PC-9 (cell line): ENCODE measurements at regions of chr1 and their contacts with region 1.

Region 1: GRCh38 chr1:22673486-22674409 is 20.7 kb downstream of the C1QB start:
- DNase-seq: peak in 1 of 2 experiments; percentile 64
- H3K4me3 ChIP-seq: no peak overlapping the region
- H3K27ac ChIP-seq: no peak overlapping the region
- H3K4me1 ChIP-seq: no peaks in the 10 kb centered on the region
- H3K27me3 ChIP-seq: no peaks in the 10 kb centered on the region
- CTCF ChIP-seq: peak; percentile 81

Region 2: GRCh38 chr1:22641906-22642636 is 31.7 kb before region 1 on chr1:
- CTCF ChIA-PET with region 1: no interaction called
- POLR2A ChIA-PET with region 1: no interaction called
- intact Hi-C with region 1: no loop called
- DNase-seq: peak in 1 of 2 experiments; percentile 73
- H3K4me3 ChIP-seq: no peak overlapping the region
- H3K27ac ChIP-seq: no peak overlapping the region
- H3K4me1 ChIP-seq: peaks cover 13% of the 10 kb centered on the region
- H3K27me3 ChIP-seq: 0 out of 2 replicates have a peak, but pooled peaks cover under 1% of the 10 kb centered on the region
- CTCF ChIP-seq: peak; percentile 85

Region 3: GRCh38 chr1:22808676-22809483 is 135.1 kb after region 1 on chr1:
- CTCF ChIA-PET with region 1: no interaction called
- POLR2A ChIA-PET with region 1: no interaction called
- intact Hi-C with region 1: no loop called
- DNase-seq: no peak
- H3K4me3 ChIP-seq: no peak overlapping the region
- H3K27ac ChIP-seq: no peak overlapping the region
- H3K4me1 ChIP-seq: peaks cover 22% of the 10 kb centered on the region
- H3K27me3 ChIP-seq: no peaks in the 10 kb centered on the region
- CTCF ChIP-seq: no peak

Region 4: GRCh38 chr1:22889213-22889827 is 215.6 kb after region 1 on chr1:
- CTCF ChIA-PET with region 1: interaction called, 3 read pairs
- POLR2A ChIA-PET with region 1: no interaction called
- intact Hi-C with region 1: loop called (anchors 1 kb)
- DNase-seq: peak in 1 of 2 experiments; percentile 12
- H3K4me3 ChIP-seq: no peak overlapping the region
- H3K27ac ChIP-seq: no peak overlapping the region
- H3K4me1 ChIP-seq: no peaks in the 10 kb centered on the region
- H3K27me3 ChIP-seq: no peaks in the 10 kb centered on the region
- CTCF ChIP-seq: peak; percentile 85